ENCODE measurements at regions of chr6 and their contacts with region 1.

Region 1: GRCh38 chr6:137707590-137708360 is 159.3 kb upstream of the TNFAIP3 start:
- DNase-seq: peak; percentile 89
- ATAC-seq: peak; percentile 64
- H3K4me3 Mint-ChIP-seq: peak overlapping the region; percentile 62
- H3K27ac Mint-ChIP-seq: peak overlapping the region; percentile 94
- H3K4me1 Mint-ChIP-seq: peaks cover 77% of the 10 kb centered on the region
- H3K27me3 Mint-ChIP-seq: no peaks in the 10 kb centered on the region

Region 2: DNA sequence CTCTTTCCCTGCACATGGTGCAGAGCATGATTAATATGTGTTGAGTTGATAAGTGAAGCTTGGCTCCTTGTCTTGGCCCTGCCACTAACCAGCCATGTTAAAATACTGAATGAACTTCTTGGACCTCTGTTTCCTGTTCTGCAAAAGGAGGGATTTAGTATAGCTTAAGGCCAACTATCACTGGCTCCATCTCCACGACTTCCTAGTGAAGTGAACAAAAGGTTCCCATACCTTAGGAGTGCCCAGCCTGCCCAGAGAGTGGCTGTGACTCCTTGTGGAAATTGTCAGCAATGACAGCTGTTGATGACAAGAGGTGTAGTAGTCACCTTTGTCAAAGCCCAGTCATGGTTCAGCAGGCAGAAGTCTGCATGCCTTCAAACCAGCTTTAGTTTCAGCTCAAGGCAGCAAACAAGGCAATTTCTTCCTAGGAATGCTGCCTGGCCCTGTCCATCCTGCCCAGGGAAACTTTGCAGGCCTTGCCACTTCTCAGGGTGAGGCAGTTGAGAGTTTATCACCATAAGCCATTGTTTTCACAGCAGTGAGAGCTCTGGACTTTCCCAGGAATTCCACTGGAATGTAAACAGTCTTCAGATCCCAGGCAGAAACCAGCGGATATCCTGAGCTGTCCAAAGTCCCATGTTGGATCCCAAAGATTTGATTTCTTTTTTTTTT is 10.4 kb before region 1 on chr6:
- CTCF ChIA-PET with region 1: interaction called, 16 read pairs
- POLR2A ChIA-PET with region 1: interaction called, 14 read pairs
- intact Hi-C with region 1: no loop called
- DNase-seq: peak; percentile 46
- ATAC-seq: peak; percentile 43
- H3K4me3 Mint-ChIP-seq: no peak overlapping the region
- H3K27ac Mint-ChIP-seq: peak overlapping the region; percentile 60
- H3K4me1 Mint-ChIP-seq: peaks cover 47% of the 10 kb centered on the region
- H3K27me3 Mint-ChIP-seq: peaks cover 7% of the 10 kb centered on the region

Region 3: GRCh38 chr6:137799950-137800568 is 92.3 kb after region 1 on chr6:
- CTCF ChIA-PET with region 1: interaction called, 13 read pairs
- POLR2A ChIA-PET with region 1: no interaction called
- intact Hi-C with region 1: loop called (anchors 1 to 2 kb)
- DNase-seq: peak; percentile 76
- ATAC-seq: peak; percentile 80
- H3K4me3 Mint-ChIP-seq: no peak overlapping the region
- H3K27ac Mint-ChIP-seq: peak overlapping the region; percentile 84
- H3K4me1 Mint-ChIP-seq: peaks cover 65% of the 10 kb centered on the region
- H3K27me3 Mint-ChIP-seq: no peaks in the 10 kb centered on the region

Region 4: GRCh38 chr6:137849181-137849980 is 141.6 kb after region 1 on chr6:
- CTCF ChIA-PET with region 1: interaction called, 3 read pairs
- POLR2A ChIA-PET with region 1: interaction called, 3 read pairs
- intact Hi-C with region 1: loop called in 1 of 2 experiments (anchors 1 kb)
- DNase-seq: peak; percentile 70
- ATAC-seq: peak; percentile 91
- H3K4me3 Mint-ChIP-seq: no peak overlapping the region
- H3K27ac Mint-ChIP-seq: peak overlapping the region; percentile 17
- H3K4me1 Mint-ChIP-seq: peaks cover 41% of the 10 kb centered on the region
- H3K27me3 Mint-ChIP-seq: no peaks in the 10 kb centered on the region

Region 5: DNA sequence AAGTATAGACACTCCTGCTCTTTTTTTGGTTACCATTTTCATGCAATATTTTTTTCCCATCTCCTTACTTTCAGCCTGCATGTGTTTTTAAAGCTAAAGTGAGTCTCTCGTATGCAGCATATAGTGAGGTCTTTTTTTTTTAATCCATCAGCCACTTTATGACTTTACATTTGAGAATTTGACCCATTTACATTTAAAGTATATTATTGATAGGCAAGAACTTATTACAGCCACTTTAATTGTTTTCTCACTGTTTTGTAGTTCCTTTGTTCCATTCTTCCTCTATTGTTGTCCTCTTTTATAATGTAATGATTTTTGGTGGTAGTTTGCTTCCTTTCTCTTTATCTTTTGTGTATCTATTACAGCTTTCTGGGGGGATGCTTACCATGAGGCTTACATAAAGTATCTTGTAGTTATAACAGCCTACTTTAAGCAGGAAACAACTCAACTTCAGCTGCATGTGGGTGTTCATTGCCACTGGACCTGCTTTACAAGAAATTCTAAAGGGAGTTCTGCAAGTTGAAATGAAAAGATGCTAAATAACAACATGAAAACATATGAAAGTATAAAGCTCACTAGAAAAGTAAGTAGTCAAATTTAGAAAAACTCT is 231.1 kb after region 1 on chr6:
- CTCF ChIA-PET with region 1: interaction called, 10 read pairs
- POLR2A ChIA-PET with region 1: no interaction called
- intact Hi-C with region 1: loop called in 1 of 2 experiments (anchors 1 kb)
- DNase-seq: no peak
- ATAC-seq: no peak
- H3K4me3 Mint-ChIP-seq: no peak overlapping the region
- H3K27ac Mint-ChIP-seq: peak overlapping the region; percentile 56
- H3K4me1 Mint-ChIP-seq: peaks cover 43% of the 10 kb centered on the region
- H3K27me3 Mint-ChIP-seq: no peaks in the 10 kb centered on the region

Region 6: GRCh38 chr6:137975188-137975940 is 267.6 kb after region 1 on chr6:
- CTCF ChIA-PET with region 1: interaction called, 12 read pairs
- POLR2A ChIA-PET with region 1: no interaction called
- intact Hi-C with region 1: loop called (anchors 1 kb)
- DNase-seq: peak; percentile 51
- ATAC-seq: peak; percentile 60
- H3K4me3 Mint-ChIP-seq: peak overlapping the region; percentile 55
- H3K27ac Mint-ChIP-seq: peak overlapping the region; percentile 90
- H3K4me1 Mint-ChIP-seq: peaks cover 72% of the 10 kb centered on the region
- H3K27me3 Mint-ChIP-seq: no peaks in the 10 kb centered on the region

Region 7: GRCh38 chr6:138007014-138007472 is 299.3 kb after region 1 on chr6:
- CTCF ChIA-PET with region 1: interaction called, 27 read pairs
- POLR2A ChIA-PET with region 1: interaction called, 3 read pairs
- intact Hi-C with region 1: loop called (anchors 1 kb)
- DNase-seq: peak; percentile 65
- ATAC-seq: peak; percentile 66
- H3K4me3 Mint-ChIP-seq: no peak overlapping the region
- H3K27ac Mint-ChIP-seq: no peak overlapping the region
- H3K4me1 Mint-ChIP-seq: peaks cover 13% of the 10 kb centered on the region
- H3K27me3 Mint-ChIP-seq: no peaks in the 10 kb centered on the region

Measured in activated CD4-positive, alpha-beta T cell treated with anti-CD3 and anti-CD28 coated beads for 36 hours (primary cell).